Activated CD8-positive, alpha-beta T cell treated with anti-CD3 and anti-CD28 coated beads, Interleukin-2, amount 10 ng/mL, durations not matched to agents 7 days and 5 days (primary cell): ENCODE measurements at regions of chr10 and their contacts with region 1.

Region 1: DNA sequence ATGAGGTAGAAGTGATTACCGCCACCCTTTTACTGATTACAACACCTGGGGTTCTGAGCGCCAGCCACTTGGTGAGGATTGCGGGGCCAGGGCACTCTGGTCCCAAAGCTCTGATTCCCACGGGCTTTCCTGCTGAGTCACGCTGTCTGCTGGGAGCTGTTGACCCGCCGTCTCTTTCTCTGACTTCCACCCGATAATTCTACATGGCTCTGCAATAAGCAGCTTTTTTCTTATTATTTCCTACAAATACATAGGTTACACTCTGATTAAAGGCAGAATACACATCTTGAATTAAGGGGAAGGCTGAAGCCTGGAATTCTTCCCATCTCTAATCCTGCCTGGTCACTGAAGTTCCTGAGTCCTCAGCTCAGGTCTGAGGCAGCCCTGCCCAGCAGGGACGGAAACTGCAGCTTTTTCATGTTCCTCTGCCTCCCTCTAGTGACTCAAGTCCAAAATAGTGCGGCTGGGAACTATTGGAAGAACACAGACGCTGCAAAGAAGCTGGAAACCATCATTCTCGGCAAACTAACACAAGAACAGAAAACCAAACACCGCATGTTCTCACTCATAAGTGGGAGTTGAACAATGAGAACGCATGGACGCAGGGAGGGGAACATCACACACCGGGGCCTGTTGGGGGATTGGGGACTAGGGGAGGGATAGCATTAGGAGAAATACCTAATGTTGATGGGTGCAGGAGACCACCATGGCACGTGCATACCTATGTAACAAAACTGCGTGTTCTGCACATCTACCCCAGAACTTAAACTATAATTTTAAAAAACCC is 178.3 kb downstream of the PRKCQ start:
- DNase-seq: peak; percentile 75
- ATAC-seq: peak; percentile 92
- H3K4me3 Mint-ChIP-seq: no peak overlapping the region
- H3K27ac Mint-ChIP-seq: peak overlapping the region; percentile 15
- H3K4me1 Mint-ChIP-seq: peaks cover 41% of the 10 kb centered on the region
- H3K27me3 Mint-ChIP-seq: peaks cover 6% of the 10 kb centered on the region

Region 2: GRCh38 chr10:6083523-6084475 is 318.0 kb before region 1 on chr10:
- CTCF ChIA-PET with region 1: interaction called, 16 read pairs
- POLR2A ChIA-PET with region 1: no interaction called
- DNase-seq: peak; percentile 74
- ATAC-seq: peak; percentile 67
- H3K4me3 Mint-ChIP-seq: peak overlapping the region; percentile 64
- H3K27ac Mint-ChIP-seq: peak overlapping the region; percentile 86
- H3K4me1 Mint-ChIP-seq: peaks cover 78% of the 10 kb centered on the region
- H3K27me3 Mint-ChIP-seq: no peaks in the 10 kb centered on the region

Region 3: DNA sequence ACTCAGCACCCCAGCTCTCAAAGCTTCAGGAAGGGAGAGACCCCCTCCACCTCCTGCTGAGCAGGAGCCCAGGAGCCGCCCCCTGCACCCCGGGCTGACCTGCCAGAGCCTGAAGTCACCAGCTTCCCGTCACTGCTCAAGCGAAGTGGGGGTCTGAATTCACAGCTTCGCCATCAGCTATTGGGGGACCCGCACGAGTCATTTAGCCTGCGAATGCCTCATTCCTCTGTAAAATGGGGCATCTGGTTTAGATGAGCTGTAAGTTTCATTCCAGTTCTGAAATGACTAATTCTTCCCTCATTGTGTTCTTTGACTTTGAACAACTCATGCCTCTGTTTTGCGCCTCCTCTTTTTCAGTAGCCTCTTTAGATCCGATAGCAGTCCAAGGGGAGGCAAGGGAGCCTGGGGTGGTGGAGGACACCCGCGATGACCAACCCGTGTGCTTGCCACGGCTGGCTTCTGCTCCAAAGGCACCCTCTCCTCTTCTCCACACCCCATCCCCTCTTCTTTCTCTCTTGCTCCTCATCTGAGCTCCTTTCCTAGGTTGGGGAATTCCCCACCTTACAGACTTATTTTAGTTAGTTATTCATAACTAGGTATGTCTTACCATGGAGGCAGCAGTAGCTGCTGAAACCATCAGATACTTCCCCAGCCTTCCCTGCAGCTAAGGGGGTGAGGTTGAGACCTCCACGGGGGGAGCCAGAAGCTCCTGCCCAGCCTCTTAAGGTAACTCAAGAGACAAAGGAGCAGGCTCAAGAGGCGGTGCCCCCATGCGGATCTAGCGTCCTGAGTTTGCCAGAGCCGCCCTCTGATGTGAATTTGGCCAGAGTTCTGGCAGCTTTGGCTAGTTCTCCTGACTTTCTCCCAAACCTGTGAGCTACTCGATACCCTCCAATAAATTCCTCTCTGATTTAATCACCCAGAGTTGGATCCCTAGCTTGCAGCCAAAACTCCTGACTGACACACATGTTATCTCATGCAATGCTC is 265.2 kb before region 1 on chr10:
- CTCF ChIA-PET with region 1: interaction called, 19 read pairs
- POLR2A ChIA-PET with region 1: no interaction called
- DNase-seq: no peak
- ATAC-seq: peak; percentile 35
- H3K4me3 Mint-ChIP-seq: no peak overlapping the region
- H3K27ac Mint-ChIP-seq: no peak overlapping the region
- H3K4me1 Mint-ChIP-seq: peaks cover 44% of the 10 kb centered on the region
- H3K27me3 Mint-ChIP-seq: peaks cover 3% of the 10 kb centered on the region

Region 4: GRCh38 chr10:6171881-6172695 is 229.7 kb before region 1 on chr10:
- CTCF ChIA-PET with region 1: interaction called, 45 read pairs
- POLR2A ChIA-PET with region 1: no interaction called
- DNase-seq: no peak
- ATAC-seq: no peak
- H3K4me3 Mint-ChIP-seq: no peak overlapping the region
- H3K27ac Mint-ChIP-seq: peak overlapping the region; percentile 75
- H3K4me1 Mint-ChIP-seq: peaks cover 71% of the 10 kb centered on the region
- H3K27me3 Mint-ChIP-seq: no peaks in the 10 kb centered on the region

Region 5: DNA sequence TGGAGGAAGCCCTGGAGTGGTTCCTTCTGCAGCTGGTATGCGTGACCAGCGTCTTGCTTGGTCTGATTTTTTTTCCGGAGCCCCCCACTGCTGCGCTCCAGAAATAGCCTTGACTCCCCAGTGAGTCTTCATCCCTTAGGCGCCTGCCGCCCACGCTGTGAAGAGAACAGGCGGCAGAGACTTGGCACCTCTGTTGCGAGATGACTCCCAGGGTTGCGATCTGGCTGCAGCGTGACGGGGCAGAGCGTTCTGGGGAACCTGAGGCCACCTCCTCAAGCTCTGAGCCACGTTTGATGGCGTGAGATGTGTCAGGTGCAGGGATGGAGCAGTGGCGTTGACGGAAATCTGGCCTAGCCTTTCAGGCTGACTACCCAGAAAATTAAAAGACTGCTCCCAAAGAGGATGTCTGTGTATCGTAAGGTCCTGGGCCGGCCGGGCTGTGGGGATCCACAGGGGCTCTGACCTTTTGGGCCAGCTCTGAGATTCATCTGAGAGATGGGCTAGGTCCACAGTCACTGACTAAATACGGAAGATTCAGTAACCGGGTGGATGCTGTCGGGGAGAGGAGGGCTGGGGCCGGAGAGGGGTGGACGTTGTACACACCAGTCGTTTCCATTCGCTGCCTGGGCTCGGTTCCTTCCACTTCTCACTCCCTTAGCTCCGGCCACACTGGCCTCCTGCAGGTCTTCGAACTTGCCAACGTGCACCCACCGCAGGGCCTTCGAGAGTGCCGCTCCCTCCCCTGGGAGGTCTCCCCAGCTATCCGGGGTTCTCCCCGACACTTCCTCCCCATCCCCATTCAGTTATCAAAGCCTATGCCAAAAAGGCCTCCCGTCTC is 165.2 kb before region 1 on chr10:
- CTCF ChIA-PET with region 1: interaction called, 10 read pairs
- POLR2A ChIA-PET with region 1: no interaction called
- DNase-seq: no peak
- ATAC-seq: no peak
- H3K4me3 Mint-ChIP-seq: no peak overlapping the region
- H3K27ac Mint-ChIP-seq: no peak overlapping the region
- H3K4me1 Mint-ChIP-seq: peaks cover 42% of the 10 kb centered on the region
- H3K27me3 Mint-ChIP-seq: no peaks in the 10 kb centered on the region

Region 6: DNA sequence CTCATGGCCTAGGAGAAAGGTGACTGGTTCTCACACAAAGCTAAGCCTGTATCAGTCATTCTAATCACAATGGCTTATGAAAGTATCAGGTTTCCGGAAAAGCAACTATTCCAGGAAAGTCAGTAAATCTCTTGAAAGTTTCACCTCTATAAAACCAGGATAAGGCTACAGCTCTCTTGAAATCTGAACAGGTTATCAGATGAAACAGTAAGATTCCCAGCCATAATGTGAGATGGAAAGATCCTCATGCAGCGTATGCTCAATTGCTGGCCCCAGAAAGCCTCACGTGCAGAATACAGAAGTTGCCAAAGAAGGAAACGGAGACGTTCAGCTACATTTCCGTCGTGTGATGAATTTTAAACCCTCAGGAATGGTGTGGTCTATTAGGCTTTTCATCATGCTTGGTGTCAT is 109.0 kb before region 1 on chr10:
- CTCF ChIA-PET with region 1: interaction called, 11 read pairs
- POLR2A ChIA-PET with region 1: no interaction called
- DNase-seq: no peak
- ATAC-seq: no peak
- H3K4me3 Mint-ChIP-seq: no peak overlapping the region
- H3K27ac Mint-ChIP-seq: no peak overlapping the region
- H3K4me1 Mint-ChIP-seq: peaks cover 58% of the 10 kb centered on the region
- H3K27me3 Mint-ChIP-seq: no peaks in the 10 kb centered on the region

Region 7: DNA sequence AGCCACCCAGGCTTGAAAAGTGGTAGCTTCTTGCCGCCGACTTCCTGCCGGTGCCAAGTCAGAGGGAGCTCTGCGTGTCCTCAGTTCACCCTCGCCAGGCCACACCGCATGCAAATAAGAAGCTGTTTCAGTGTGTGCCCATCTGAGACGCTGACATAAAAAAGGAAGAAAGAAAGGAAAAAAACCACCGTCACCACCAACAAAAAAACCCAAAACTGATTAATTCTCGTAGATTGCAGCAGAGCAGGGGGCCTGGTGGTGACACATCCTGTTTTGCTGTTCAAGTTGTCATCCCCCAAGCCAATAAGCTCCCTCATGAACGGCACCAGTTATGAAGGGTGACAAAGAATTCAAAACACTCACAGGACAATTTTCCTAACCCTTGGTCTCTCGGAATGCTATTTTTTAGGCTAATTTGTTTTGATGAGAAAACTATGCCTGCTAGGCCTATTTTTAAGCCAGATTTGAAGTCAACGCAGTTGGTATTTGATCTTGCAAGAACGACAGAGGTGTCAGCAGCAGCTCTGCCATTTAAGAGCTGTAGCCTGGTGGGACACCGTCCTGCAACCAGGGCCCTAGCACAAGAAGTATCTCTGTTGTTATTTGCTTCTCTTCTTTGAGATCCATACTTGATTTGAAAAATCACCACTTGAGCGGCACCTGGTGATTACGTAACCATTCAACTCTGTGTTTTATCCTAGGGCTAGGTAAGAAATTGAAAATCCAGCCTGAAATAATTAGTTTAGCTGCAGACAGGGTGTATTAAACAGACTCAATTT is 53.5 kb before region 1 on chr10:
- CTCF ChIA-PET with region 1: interaction called, 83 read pairs
- POLR2A ChIA-PET with region 1: interaction called, 14 read pairs
- DNase-seq: peak; percentile 91
- ATAC-seq: peak; percentile 94
- H3K4me3 Mint-ChIP-seq: peak overlapping the region; percentile 63
- H3K27ac Mint-ChIP-seq: peak overlapping the region; percentile 98
- H3K4me1 Mint-ChIP-seq: peaks cover 66% of the 10 kb centered on the region
- H3K27me3 Mint-ChIP-seq: no peaks in the 10 kb centered on the region

Region 8: DNA sequence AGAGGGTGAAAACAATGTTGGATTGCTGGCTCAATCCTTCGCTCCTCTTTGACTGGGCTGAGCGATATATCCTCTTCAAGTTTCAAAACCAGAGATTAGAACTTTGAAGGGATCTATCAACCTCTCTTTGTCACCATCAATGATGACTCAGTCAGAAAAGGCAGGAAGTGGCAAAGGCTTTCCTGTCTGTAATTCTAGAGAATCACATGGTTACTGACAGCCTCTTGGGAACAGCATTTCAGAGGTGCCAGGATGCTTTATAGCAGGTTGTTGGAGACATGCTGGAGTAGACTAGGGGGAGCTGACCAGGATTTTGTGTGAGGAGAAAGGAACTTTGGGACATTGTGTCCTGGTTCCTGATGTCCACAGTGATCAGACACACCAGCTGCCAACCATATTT is 97.0 kb after region 1 on chr10:
- CTCF ChIA-PET with region 1: no interaction called
- POLR2A ChIA-PET with region 1: no interaction called
- DNase-seq: peak; percentile 74
- ATAC-seq: peak; percentile 74
- H3K4me3 Mint-ChIP-seq: peak overlapping the region; percentile 53
- H3K27ac Mint-ChIP-seq: peak overlapping the region; percentile 92
- H3K4me1 Mint-ChIP-seq: peaks cover 30% of the 10 kb centered on the region
- H3K27me3 Mint-ChIP-seq: no peaks in the 10 kb centered on the region